ENCODE measurements at regions of chr16 and their contacts with region 1.

Region 1: DNA sequence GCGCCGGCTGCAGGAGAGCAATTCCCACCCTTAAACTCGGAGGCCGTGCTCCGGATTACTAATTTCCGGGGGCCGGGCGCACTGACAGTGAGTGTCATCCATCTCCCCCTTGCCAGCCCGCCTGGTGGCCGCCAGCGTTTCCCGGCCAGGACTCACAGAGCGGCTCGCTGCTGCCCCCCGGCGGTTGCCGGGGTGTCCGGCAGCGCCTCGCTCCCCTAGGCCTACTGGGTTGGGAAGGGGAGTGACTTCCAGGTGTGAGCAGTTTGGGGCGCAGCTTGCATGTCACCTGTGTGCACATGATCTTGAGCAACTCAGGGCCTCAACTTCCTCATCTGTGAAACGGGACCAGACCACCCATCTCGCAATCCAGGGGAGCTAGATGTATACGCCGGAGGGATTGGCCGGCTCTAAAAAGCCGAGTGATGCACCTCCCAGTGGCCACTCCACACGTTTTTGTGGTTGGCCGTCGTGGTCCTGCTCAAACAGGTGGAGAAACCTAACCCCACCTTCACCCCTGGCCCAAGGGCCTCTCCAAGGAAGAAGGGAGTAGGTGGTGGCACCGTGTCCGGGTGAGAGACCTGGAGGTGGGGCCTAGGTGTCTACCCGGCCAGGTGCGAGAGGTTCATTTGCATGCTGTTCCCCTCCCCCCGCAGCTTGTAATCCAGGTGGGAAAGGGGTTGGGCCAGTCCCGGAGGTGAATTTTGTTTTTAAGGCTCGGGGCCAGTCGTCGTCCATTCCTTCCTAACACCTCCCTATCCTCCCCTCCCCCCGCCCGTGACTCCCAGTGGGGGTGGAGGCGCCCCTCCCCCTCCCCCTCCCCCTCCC is 2.4 kb upstream of the GSE1 start:
- DNase-seq: no peak
- H3K4me3 ChIP-seq: peak overlapping the region; percentile 25
- CTCF ChIP-seq: peak; percentile 95

Region 2: GRCh38 chr16:85004559-85005205 is 606.0 kb before region 1 on chr16:
- CTCF ChIA-PET with region 1: no interaction called
- POLR2A ChIA-PET with region 1: no interaction called
- DNase-seq: peak; percentile 70
- H3K4me3 ChIP-seq: no peak overlapping the region; the same call in 1 of the 2 replicates
- CTCF ChIP-seq: no peak

Region 3: DNA sequence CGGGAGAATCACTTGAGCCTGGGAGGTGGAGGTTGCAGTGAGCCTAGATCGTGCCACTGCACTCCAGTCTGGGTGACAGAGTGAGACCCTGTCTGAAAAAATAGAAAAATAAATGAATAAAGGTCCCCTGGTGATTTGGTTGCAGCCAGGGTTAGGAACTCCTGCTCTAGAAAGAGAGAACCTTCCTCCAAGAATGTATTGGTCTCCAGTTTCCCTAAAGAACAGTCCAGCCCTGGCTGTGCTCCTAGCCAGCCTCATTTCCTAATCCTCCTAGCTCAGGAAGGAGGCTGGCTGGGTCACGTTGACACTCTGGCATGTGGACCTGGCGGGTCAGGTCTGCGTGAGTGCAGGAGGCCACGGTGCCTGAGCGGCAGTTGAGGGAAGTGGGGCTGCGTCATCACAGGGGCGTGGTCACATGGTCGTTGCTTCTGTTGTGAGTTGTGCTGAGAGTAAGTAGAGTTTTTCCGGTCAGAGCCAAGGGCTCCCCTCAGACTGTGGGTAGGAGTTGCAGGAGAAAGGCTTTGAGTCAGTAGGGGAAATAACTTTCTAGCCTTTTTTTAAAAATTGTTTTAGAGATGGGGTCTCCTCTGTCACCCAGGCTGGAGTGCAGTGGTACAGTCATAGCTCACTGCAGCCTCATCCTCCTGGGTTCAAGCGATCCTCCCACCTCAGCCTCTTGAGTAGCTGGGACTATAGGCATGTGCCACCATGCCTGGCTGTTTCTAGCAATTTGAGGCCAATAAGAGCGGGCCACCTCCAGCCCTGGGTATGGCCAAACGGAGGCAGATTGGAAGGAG is 304.5 kb before region 1 on chr16:
- CTCF ChIA-PET with region 1: interaction called, 10 read pairs
- POLR2A ChIA-PET with region 1: no interaction called
- DNase-seq: no peak
- H3K4me3 ChIP-seq: no peak overlapping the region
- CTCF ChIP-seq: no peak

Region 4: GRCh38 chr16:85393674-85394483 is 216.8 kb before region 1 on chr16:
- CTCF ChIA-PET with region 1: interaction called, 86 read pairs
- POLR2A ChIA-PET with region 1: no interaction called
- DNase-seq: no peak
- H3K4me3 ChIP-seq: peak overlapping the region; percentile 15; the same call in 1 of the 2 replicates
- CTCF ChIP-seq: peak; percentile 95

Region 5: GRCh38 chr16:85428168-85428898 is 182.4 kb before region 1 on chr16:
- CTCF ChIA-PET with region 1: interaction called, 59 read pairs
- POLR2A ChIA-PET with region 1: no interaction called
- DNase-seq: no peak
- H3K4me3 ChIP-seq: no peak overlapping the region
- CTCF ChIP-seq: peak; percentile 46

Region 6: GRCh38 chr16:85554112-85554813 is 56.5 kb before region 1 on chr16:
- CTCF ChIA-PET with region 1: interaction called, 12 read pairs
- POLR2A ChIA-PET with region 1: interaction called, 4 read pairs
- DNase-seq: no peak
- H3K4me3 ChIP-seq: peak overlapping the region; percentile 76
- CTCF ChIP-seq: no peak

Region 7: GRCh38 chr16:85651822-85652430 is 41.2 kb after region 1 on chr16:
- CTCF ChIA-PET with region 1: no interaction called
- POLR2A ChIA-PET with region 1: no interaction called
- DNase-seq: no peak
- H3K4me3 ChIP-seq: no peak overlapping the region
- CTCF ChIP-seq: no peak

Region 8: DNA sequence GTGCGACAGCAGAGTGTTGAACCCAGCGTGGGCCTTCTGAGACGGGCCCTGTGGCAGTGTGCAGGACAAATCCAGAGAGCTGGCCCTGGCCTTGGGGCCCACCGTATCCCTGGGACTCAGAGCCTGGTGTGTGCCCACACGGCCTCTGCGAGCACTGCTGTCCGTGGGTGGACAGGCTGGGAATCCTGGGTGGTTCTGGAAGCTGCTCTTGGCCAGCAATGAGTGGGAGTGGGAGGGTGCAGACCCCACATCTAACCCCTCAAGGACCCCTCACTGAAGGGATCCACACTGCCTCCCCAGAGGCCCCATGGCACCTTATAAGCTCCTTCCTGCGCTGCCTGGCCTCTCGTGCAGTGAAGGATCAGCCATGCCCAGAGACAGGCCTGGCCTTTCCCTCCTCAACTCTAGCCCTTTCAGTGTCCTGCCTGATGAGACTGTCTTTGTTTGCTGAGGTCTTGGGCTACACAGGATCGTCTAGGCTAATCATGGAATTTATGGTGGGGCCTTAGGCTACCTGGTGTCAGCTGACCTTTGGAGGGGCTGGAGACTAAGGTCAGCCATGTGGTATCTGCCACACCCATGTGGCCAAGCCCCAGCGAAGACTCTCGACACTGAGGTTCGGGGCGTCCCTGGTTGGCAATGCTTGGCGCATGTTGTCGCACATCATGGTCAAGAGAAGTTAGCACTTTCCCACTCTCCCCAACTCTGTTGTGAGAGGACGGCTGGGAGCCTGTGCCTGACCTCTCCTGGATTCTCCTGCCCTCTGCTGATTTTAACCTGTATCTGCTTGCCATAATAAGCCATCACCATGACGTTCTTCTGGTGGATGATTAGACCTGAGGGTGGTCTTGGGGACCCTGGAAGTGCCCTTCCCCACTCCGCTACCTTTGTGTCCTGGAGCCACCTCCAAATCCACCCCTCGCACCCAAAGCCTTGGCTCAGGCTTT is 94.5 kb after region 1 on chr16:
- CTCF ChIA-PET with region 1: no interaction called
- POLR2A ChIA-PET with region 1: no interaction called
- DNase-seq: no peak
- H3K4me3 ChIP-seq: no peak overlapping the region
- CTCF ChIP-seq: no peak

Region 9: GRCh38 chr16:85829751-85830445 is 219.2 kb after region 1 on chr16:
- CTCF ChIA-PET with region 1: no interaction called
- POLR2A ChIA-PET with region 1: no interaction called
- DNase-seq: no peak
- H3K4me3 ChIP-seq: no peak overlapping the region
- CTCF ChIP-seq: no peak